B cell (primary cell): ENCODE measurements at regions of chr16 and their contacts with region 1.

Region 1: GRCh38 chr16:10428433-10429168 is 42.7 kb downstream of the ATF7IP2 start:
- DNase-seq: no peak
- ATAC-seq: no peak
- H3K4me3 ChIP-seq: no peak overlapping the region
- H3K4me3 Mint-ChIP-seq: no peak overlapping the region
- H3K27ac ChIP-seq: no peak overlapping the region
- H3K27ac Mint-ChIP-seq: no peak overlapping the region
- H3K4me1 ChIP-seq: no peaks in the 10 kb centered on the region
- H3K4me1 Mint-ChIP-seq: no peaks in the 10 kb centered on the region
- H3K27me3 ChIP-seq: no peaks in the 10 kb centered on the region
- H3K27me3 Mint-ChIP-seq: no peaks in the 10 kb centered on the region
- CTCF ChIP-seq: no peak

Region 2: DNA sequence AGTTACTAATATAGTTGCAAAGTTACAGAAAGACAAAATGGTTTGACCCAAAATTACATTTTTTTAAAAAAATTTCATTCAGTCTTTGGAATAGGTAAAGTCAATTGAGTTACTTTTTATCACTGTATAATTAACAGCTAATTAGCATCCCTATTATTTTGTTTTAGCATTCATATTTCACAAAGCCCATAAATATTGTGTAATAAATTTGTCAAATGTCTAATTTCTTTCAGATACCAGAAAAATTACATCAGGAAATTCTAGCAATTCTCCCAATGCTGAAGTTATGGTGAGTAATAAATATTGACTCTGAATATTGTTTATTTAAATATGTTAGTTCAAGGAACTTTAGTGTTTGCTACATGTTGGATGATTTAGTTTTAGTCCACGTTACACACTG is 44.6 kb after region 1 on chr16:
- CTCF ChIA-PET with region 1: no interaction called
- POLR2A ChIA-PET with region 1: no interaction called
- intact Hi-C with region 1: loop called (anchors 10 kb)
- DNase-seq: no peak
- ATAC-seq: no peak
- H3K4me3 ChIP-seq: no peak overlapping the region
- H3K4me3 Mint-ChIP-seq: no peak overlapping the region
- H3K27ac ChIP-seq: no peak overlapping the region
- H3K27ac Mint-ChIP-seq: no peak overlapping the region
- H3K4me1 ChIP-seq: no peaks in the 10 kb centered on the region
- H3K4me1 Mint-ChIP-seq: no peaks in the 10 kb centered on the region
- H3K27me3 ChIP-seq: no peaks in the 10 kb centered on the region
- H3K27me3 Mint-ChIP-seq: no peaks in the 10 kb centered on the region
- CTCF ChIP-seq: no peak